ENCODE measurements at regions of chr1 and their contacts with region 1.

Region 1: DNA sequence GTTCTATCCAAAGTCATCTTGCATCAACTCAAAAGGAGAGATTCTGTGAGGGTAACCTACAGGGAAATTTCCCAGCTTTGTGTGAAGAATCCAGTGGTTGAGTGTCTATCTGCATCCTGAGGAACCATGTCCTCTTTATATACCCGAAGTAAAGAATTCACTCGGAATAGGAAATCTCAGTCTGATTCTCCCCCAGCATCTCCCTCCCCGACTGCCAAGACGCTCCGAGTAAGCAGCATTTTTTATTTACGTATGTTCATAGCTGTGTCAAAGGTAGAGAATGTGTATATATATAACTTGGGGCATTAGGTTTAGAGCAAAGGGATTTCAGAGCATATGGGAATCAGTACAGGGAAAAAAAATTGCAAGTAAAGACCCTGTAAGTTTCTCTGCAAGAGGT is 170.2 kb downstream of the SYT2 start:
- DNase-seq: no peak
- H3K4me3 ChIP-seq: peak overlapping the region; percentile 68 to 77
- H3K27ac ChIP-seq: peak overlapping the region; percentile 92 to 95
- H3K4me1 ChIP-seq: peaks cover 0 to 14% of the 10 kb centered on the region in 2 donors
- H3K27me3 ChIP-seq: no peaks in the 10 kb centered on the region
- CTCF ChIP-seq: no peak

Region 2: GRCh38 chr1:202522983-202523382 is 17.0 kb before region 1 on chr1:
- intact Hi-C with region 1: loop called (anchors 2 kb)
- DNase-seq: no peak
- H3K4me3 ChIP-seq: no peak overlapping the region
- H3K27ac ChIP-seq: no peak overlapping the region
- H3K4me1 ChIP-seq: peaks cover 15 to 24% of the 10 kb centered on the region in 2 donors
- H3K27me3 ChIP-seq: no peaks in the 10 kb centered on the region
- CTCF ChIP-seq: no peak

Region 3: DNA sequence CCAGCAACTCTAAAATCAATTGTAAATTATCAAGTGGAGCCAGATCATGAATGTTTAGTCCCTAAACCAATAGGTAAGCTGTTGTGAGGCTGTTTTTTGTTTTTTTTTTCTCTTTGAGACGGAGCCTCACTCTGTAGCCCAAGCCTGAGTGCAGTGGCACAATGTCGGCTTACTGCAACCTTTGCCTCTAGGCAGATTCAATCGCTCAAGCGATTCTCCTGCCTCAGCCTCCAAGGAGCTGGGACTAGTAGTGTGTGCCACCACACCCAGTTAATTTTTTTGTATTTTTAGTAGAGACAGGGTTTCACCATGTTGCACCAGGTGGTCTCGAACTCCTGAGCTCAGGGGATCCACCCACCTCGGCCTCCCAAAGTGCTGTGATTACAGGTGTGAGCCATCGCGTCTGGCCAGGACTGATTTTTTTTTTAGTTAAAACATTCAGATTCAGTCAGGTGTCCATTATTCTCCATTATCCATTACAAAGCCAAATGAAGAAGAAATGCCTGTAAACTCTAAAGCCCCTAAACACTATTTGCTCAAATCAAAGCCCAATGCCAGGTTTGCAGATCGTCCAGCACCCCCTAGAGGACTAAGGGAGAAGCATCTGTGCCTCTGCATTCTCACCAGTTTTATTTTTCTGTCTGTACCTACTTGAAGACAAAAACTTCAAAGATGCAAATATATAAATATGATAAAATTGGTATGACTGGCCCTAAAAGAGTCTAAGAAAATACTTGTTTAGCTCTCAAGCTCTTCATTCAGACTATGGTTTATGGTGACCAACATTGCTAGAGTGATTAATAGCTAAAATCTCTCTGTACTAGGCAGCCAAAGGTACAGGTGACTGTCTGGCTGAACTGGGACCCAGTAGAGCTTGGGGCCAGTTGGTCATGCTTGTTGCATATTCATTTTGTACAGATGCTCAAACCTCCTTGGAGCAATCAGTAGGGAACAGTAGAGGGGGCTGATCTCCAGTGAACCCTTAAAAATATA is 31.6 kb after region 1 on chr1:
- intact Hi-C with region 1: loop called (anchors 2 kb)
- DNase-seq: no peak
- H3K4me3 ChIP-seq: no peak overlapping the region
- H3K27ac ChIP-seq: peak overlapping the region; percentile 70 to 79
- H3K4me1 ChIP-seq: peaks cover 12 to 75% of the 10 kb centered on the region in 2 donors
- H3K27me3 ChIP-seq: no peaks in the 10 kb centered on the region
- CTCF ChIP-seq: peak; percentile 61 to 73 (median 66)

Region 4: DNA sequence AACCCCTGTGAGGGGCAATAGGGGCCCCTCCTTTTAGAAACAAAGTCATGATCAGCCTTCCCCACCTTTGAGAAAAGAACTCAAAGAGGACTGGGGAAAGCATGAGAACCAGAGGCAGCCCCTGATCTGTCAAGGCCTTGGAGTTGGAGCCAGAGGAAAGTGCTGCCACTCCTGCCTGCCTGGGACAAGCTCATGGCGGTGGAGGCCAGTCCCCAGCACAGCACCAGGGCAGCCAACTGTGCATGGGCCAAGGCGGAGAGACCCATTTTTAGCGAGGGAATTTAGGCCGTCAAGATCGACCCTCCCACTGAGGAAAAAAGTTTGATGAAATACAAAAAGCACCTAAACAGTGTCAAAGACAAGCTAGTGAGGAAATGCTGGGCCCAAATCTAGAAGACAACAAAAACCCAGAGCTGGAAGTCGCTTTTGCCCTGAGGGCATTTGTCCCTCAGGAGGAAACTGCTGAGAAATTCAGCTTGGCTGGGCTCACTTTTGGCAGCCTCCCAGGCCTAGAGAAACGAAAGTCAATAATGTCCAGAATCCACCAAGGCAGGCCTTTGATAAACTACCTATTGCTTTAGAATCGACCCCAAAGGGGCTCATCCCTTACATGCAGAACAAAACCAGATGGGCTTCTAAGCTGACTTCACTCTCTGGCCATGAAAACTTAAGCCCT is 131.2 kb after region 1 on chr1:
- intact Hi-C with region 1: no loop called
- DNase-seq: no peak
- H3K4me3 ChIP-seq: no peak overlapping the region
- H3K27ac ChIP-seq: no peak overlapping the region
- H3K4me1 ChIP-seq: no peaks in the 10 kb centered on the region
- H3K27me3 ChIP-seq: no peaks in the 10 kb centered on the region
- CTCF ChIP-seq: no peak

Measured in ascending aorta (tissue), 2 donors.